ENCODE measurements at regions of chr19 and their contacts with region 1.

Region 1: DNA sequence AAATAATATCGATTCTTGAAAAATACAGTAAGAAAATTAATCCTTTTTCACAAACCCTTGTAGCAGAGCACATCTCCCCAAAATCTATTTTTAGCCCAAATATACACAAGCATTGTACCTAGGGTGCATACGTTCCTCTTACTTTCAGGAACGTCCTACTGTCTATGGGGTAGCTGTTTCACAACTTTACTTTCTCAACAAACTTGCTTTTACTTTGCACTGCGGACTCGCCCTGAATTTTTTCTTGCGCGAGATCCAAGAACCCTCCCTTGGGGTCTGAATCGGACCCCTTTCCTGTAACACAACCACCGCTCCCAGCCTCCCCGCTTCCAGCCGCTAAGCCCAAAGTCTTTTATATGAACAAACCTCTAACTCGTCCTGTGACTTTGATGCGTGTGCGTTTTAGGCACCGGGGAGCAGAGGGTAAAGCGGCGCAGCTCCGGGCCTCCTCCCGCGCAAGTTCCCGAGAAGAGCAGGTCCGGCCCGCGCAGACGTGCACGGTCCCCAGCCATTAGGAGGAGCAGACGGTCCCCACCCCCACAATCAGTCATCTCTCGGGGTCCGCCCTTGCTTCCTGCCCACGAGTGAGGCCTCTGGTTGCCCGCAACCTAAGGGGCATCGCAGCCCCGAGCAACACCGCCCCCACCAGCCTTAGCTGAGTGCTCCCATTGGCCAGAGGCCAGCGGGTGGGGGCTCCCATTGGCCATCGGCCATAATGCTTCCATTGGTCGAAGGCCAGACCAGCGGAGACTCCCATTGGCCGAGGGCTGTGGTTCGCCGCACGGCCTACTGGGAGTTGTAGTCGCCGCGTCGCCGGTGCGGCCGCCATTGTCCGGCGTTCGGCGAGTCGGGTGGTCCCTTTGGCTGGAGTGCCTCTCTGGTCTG is at the start of gene ZNF8:
- DNase-seq: peak; percentile 99
- H3K4me3 ChIP-seq: peak within 1 kb of the TSS; percentile 83
- H3K27ac ChIP-seq: peak within 1 kb of the TSS; percentile 52
- H3K4me1 ChIP-seq: peaks cover 18% of the 10 kb centered on the region
- CTCF ChIP-seq: no peak
- total RNA-seq, gene ZNF8: 7.3 and 7.8 TPM in 2 replicates

Region 2: GRCh38 chr19:58228585-58229254 is 49.7 kb before region 1 on chr19 and contains the start of gene ZNF544:
- CTCF ChIA-PET with region 1: no interaction called
- POLR2A ChIA-PET with region 1: no interaction called
- intact Hi-C with region 1: no loop called
- DNase-seq: peak; percentile 64
- H3K4me3 ChIP-seq: peak within 1 kb of the TSS; percentile 72
- H3K27ac ChIP-seq: peak within 1 kb of the TSS; percentile 42
- H3K4me1 ChIP-seq: no peaks in the 10 kb centered on the region
- CTCF ChIP-seq: no peak
- total RNA-seq, gene ZNF544: 34.1 and 38.6 TPM in 2 replicates

Region 3: GRCh38 chr19:58305065-58305931 is 26.9 kb after region 1 on chr19 and contains the start of gene ERVK3-1:
- CTCF ChIA-PET with region 1: no interaction called
- POLR2A ChIA-PET with region 1: interaction called, 3 read pairs
- intact Hi-C with region 1: loop called (anchors 2 kb)
- DNase-seq: peak; percentile 98
- H3K4me3 ChIP-seq: peak within 1 kb of the TSS; percentile 94
- H3K27ac ChIP-seq: peak within 1 kb of the TSS; percentile 46
- H3K4me1 ChIP-seq: peaks cover 15% of the 10 kb centered on the region
- CTCF ChIP-seq: no peak
- total RNA-seq, gene ERVK3-1: 61.7 and 79.6 TPM in 2 replicates

Region 4: DNA sequence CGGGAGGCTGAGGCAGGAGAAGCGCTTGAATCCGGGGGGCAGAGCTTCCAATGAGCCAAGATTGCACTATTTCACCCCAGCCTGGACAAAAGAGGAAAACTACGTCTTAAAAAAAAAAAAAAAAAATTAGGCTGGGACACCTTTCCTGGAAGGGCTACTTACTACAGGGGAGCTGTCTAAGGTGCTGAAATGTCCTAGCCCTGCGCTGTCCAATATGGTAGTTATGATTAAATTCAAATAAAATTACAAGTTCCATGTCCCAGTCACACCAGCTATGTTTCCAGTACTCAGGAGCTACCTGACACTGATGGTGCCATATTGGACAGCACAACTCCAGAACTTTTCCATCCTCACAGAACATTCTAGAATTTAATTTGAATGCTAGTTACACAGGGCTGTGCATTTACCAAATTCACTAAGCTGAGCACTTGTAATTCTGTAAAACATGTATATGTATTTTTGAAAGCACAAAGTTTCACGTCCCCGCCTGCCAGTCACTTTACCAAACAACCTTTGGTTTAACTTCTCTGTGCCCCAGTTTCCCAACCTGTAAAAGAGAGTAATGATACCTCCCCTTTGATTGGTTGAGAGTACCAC is 39.2 kb after region 1 on chr19:
- CTCF ChIA-PET with region 1: no interaction called
- POLR2A ChIA-PET with region 1: no interaction called
- intact Hi-C with region 1: no loop called
- DNase-seq: peak; percentile 36
- H3K4me3 ChIP-seq: no peak overlapping the region
- H3K27ac ChIP-seq: no peak overlapping the region
- H3K4me1 ChIP-seq: no peaks in the 10 kb centered on the region
- CTCF ChIP-seq: no peak

Region 5: GRCh38 chr19:58352760-58353671 is 74.6 kb after region 1 on chr19 and contains the start of gene A1BG:
- CTCF ChIA-PET with region 1: no interaction called
- POLR2A ChIA-PET with region 1: no interaction called
- intact Hi-C with region 1: no loop called
- DNase-seq: no peak
- H3K4me3 ChIP-seq: no peak within 1 kb of the TSS
- H3K27ac ChIP-seq: no peak within 1 kb of the TSS
- H3K4me1 ChIP-seq: peaks cover 12% of the 10 kb centered on the region
- CTCF ChIP-seq: no peak
- total RNA-seq, gene A1BG: 21.3 and 47.2 TPM in 2 replicates

Region 6: DNA sequence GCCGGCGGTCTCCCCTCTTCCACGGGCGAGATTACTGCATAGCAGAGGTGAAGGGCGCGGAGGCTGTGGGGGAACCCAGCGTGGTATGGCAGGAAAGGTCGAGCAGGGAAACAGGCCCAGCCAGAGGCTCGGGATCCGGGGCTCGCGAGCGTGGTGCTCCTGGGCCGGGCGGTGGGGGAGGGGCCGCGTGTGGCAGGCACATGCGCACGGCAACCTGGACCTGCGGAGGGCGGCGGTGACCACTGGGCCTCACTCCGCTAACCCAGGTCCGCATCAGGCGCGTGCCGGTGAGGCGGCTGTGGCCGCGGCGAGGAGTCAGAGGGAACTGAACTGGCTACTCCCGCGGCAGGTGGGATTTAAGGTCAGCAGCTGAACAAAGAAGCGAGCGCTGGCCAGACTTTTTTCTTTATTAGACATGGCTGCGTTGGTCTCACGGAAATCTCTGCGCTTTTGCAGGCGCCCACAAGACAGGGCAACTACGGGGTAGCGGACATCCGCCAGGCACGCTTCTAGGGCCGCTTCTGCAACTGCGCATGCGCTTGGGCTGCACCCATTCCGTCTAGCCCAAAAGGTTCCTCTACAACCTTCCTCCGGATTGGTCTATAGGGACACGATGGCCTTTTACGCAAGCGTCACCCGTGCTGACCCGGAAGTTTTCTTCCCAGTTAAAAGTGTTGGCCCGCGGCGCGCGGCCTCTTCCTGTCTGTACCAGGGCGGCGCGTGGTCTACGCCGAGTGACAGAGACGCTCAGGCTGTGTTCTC is 108.4 kb after region 1 on chr19 and contains the start of gene RPS5:
- CTCF ChIA-PET with region 1: no interaction called
- POLR2A ChIA-PET with region 1: no interaction called
- intact Hi-C with region 1: loop called (anchors 1 kb)
- DNase-seq: peak; percentile 99
- H3K4me3 ChIP-seq: peak within 1 kb of the TSS; percentile 100
- H3K27ac ChIP-seq: peak within 1 kb of the TSS; percentile 78
- H3K4me1 ChIP-seq: peaks cover 40% of the 10 kb centered on the region
- CTCF ChIP-seq: no peak
- total RNA-seq, gene RPS5: 3,315 and 3,333 TPM in 2 replicates

Region 7: GRCh38 chr19:58451358-58452101 is 173.1 kb after region 1 on chr19 and contains the start of gene ZNF324B:
- CTCF ChIA-PET with region 1: no interaction called
- POLR2A ChIA-PET with region 1: no interaction called
- intact Hi-C with region 1: no loop called
- DNase-seq: peak; percentile 98
- H3K4me3 ChIP-seq: peak within 1 kb of the TSS; percentile 73
- H3K27ac ChIP-seq: no peak within 1 kb of the TSS
- H3K4me1 ChIP-seq: no peaks in the 10 kb centered on the region
- CTCF ChIP-seq: 0 out of 2 replicates have a peak, but pooled peaks have one; percentile 32
- total RNA-seq, gene ZNF324B: 10.6 and 13.8 TPM in 2 replicates

Measured in OCI-LY7 (cell line).